K562 (cell line): ENCODE measurements at regions of chr12 and their contacts with region 1.

Region 1: DNA sequence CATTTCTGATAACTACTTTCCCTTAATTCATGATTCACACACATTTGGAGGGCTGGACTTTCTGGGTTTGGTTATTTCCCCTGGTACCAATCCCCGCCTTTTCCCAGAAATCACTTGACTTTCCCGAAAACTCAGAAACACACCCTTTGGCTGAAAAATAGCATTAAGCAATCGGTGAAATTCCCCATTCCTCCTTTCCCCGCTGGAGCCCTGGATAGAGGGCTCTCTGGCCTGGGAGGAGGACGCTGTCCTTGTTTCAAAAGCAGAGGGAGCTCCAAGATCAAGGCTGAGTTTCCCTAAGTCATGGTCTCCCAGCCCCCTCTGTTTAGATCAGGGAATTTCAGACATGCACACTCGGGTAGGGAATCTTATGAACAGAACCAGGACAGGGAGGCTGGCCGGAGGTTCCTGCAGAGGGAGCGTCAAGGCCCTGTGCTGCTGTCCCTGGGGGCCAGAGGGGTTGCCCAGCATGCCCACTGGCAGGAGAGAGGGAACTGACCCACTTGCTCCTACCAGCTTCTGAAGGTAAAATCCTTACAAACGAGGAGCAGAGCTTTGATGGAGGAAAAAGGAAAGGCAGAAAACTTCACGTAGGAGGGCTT is at the start of gene C1S:
- DNase-seq: peak; percentile 29 to 59 (median 43)
- ATAC-seq: peak; percentile 88
- H3K4me3 ChIP-seq: no peak within 1 kb of the TSS
- H3K27ac ChIP-seq: no peak within 1 kb of the TSS
- H3K4me1 ChIP-seq: peaks cover 11 to 18% of the 10 kb centered on the region in 2 experiments; a peak in 3 of 5 replicates
- H3K27me3 ChIP-seq: no peaks in the 10 kb centered on the region
- CTCF ChIP-seq: peak; percentile 65 to 79 (median 68)
- EP300 ChIP-seq: no peak
- POLR2A ChIP-seq: no peak
- RAD21 ChIP-seq: peak; percentile 73 to 74
- polyA plus RNA-seq, gene C1S: 0.08 to 0.11 TPM

Region 2: DNA sequence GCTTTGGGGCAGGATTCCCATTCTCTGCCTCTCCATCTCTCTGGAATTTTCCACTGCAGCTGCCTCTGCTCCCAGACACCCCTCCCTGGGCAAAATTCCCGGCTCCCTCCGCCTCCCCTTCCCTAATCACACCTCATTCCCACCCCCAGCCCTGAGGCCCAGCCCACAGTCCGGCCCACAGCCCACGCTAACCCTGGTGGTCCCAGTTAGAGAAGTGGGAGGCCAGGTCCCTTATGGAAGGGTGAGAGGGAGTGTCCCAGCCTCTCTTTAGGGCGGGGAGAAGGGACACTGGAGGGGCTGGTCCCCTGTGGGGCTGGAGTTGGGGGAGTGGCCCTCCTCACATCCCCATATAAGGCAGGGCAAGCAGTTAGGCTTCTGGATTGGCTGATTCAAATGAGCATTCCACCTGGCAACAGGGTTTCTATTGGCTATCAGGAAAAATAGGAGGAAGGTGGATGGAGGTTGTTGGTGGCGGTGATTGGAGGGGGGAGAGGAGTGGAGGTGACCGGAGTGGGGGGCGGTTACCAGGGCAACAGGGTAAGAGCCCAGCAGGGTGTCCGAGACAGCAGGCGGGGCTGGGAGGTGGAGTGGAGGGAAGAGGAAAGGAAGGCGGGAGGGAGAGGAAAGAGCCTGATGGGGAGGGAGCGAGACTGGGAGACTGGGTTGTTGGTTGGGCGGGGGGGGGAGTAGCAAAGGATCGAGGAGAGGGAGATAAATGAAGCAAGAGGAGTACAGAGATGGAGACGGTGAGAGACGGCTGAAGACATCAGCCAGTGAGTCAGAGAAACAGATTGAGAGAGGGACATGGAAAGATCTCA is 296.2 kb before region 1 on chr12:
- CTCF ChIA-PET with region 1: no interaction called
- POLR2A ChIA-PET with region 1: no interaction called
- in situ Hi-C with region 1: no loop called
- intact Hi-C with region 1: no loop called
- DNase-seq: peak; percentile 87 to 95 (median 90)
- ATAC-seq: peak; percentile 86
- H3K4me3 ChIP-seq: no peak overlapping the region
- H3K27ac ChIP-seq: peak overlapping the region; percentile 65
- H3K4me1 ChIP-seq: peaks cover 24 to 29% of the 10 kb centered on the region in 2 experiments; a peak in 4 of 5 replicates
- H3K27me3 ChIP-seq: no peaks in the 10 kb centered on the region
- CTCF ChIP-seq: no peak
- EP300 ChIP-seq: peak; percentile 33; the same call in 1 of the 2 replicates
- POLR2A ChIP-seq: no peak
- RAD21 ChIP-seq: no peak

Region 3: DNA sequence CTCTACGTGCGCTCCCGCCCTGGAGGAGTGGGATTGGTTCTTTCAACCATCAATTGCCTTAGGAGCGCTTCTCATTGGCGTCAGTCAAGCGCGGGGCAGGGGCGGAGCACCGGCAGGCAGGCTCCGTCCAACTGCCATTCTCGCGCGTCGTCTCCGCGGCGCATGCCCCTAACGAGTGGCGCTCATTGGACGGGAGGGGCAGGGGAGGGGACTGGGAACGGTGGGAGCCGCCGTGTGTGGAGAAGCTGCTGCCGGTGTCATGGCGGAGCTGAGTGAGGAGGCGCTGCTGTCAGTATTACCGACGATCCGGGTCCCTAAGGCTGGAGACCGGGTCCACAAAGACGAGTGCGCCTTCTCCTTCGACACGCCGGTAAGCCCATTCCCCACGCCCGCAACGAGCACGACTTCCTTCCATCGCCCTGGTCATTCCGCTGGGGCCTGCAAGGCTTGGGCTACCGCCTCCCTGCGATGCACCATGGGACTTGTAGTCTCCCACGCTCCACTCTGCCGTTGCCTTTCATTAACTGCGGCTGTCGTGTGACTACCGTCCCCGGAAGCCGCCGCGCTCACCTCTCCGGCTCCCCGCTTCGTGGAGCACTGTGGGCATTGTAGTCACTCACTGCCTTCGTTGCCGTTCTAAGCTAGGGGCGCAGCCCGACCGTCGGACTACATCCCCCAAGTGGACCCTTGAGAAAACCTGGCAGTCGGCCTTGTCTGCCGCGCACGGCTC is 208.4 kb before region 1 on chr12 and contains the start of gene USP5:
- CTCF ChIA-PET with region 1: no interaction called
- POLR2A ChIA-PET with region 1: no interaction called
- in situ Hi-C with region 1: no loop called
- intact Hi-C with region 1: no loop called
- DNase-seq: peak; percentile 87 to 98 (median 90)
- ATAC-seq: peak; percentile 87
- H3K4me3 ChIP-seq: peak within 1 kb of the TSS; percentile 79
- H3K27ac ChIP-seq: peak within 1 kb of the TSS; percentile 87
- H3K4me1 ChIP-seq: peaks cover 12 to 18% of the 10 kb centered on the region in 2 experiments; a peak in 4 of 5 replicates
- H3K27me3 ChIP-seq: no peaks in the 10 kb centered on the region
- CTCF ChIP-seq: 0 out of 6 replicates have a peak, but pooled peaks of 1 of the 3 experiments have one; percentile 1
- EP300 ChIP-seq: no peak
- POLR2A ChIP-seq: peak; percentile 79
- RAD21 ChIP-seq: no peak
- polyA plus RNA-seq, gene USP5: 1.4 to 3.4 TPM

Region 4: GRCh38 chr12:7092229-7092985 is 32.0 kb after region 1 on chr12 and contains the start of gene C1R:
- CTCF ChIA-PET with region 1: interaction called, 4 read pairs
- POLR2A ChIA-PET with region 1: no interaction called
- in situ Hi-C with region 1: no loop called
- intact Hi-C with region 1: loop called (anchors 2 kb)
- DNase-seq: peak; percentile 58 to 71 (median 60)
- ATAC-seq: peak; percentile 76
- H3K4me3 ChIP-seq: no peak within 1 kb of the TSS
- H3K27ac ChIP-seq: no peak within 1 kb of the TSS
- H3K4me1 ChIP-seq: peaks cover 6 to 24% of the 10 kb centered on the region in 2 experiments; a peak in 3 of 5 replicates
- H3K27me3 ChIP-seq: no peaks in the 10 kb centered on the region; a peak in 1 of 5 replicates
- CTCF ChIP-seq: peak; percentile 61 to 84 (median 81)
- EP300 ChIP-seq: no peak
- POLR2A ChIP-seq: no peak
- RAD21 ChIP-seq: peak; percentile 60 to 67
- polyA plus RNA-seq, gene C1R: 0.07 TPM in 1 of 2 experiments, not detected in the other

Region 5: GRCh38 chr12:7108796-7109571 is 48.5 kb after region 1 on chr12 and contains the start of gene C1RL:
- CTCF ChIA-PET with region 1: interaction called, 25 read pairs
- POLR2A ChIA-PET with region 1: no interaction called
- in situ Hi-C with region 1: no loop called
- intact Hi-C with region 1: loop called (anchors 1 kb)
- DNase-seq: peak; percentile 66 to 88 (median 68)
- ATAC-seq: peak; percentile 58
- H3K4me3 ChIP-seq: peak within 1 kb of the TSS; percentile 75
- H3K27ac ChIP-seq: peak within 1 kb of the TSS; percentile 97
- H3K4me1 ChIP-seq: peaks cover 10 to 21% of the 10 kb centered on the region in 2 experiments
- H3K27me3 ChIP-seq: no peaks in the 10 kb centered on the region
- CTCF ChIP-seq: peak; percentile 83 to 93 (median 86)
- EP300 ChIP-seq: peak; percentile 62
- POLR2A ChIP-seq: peak; percentile 52; the same call in 1 of the 2 replicates
- RAD21 ChIP-seq: peak; percentile 63 to 73
- polyA plus RNA-seq, gene C1RL: 1.4 to 1.9 TPM

Region 6: DNA sequence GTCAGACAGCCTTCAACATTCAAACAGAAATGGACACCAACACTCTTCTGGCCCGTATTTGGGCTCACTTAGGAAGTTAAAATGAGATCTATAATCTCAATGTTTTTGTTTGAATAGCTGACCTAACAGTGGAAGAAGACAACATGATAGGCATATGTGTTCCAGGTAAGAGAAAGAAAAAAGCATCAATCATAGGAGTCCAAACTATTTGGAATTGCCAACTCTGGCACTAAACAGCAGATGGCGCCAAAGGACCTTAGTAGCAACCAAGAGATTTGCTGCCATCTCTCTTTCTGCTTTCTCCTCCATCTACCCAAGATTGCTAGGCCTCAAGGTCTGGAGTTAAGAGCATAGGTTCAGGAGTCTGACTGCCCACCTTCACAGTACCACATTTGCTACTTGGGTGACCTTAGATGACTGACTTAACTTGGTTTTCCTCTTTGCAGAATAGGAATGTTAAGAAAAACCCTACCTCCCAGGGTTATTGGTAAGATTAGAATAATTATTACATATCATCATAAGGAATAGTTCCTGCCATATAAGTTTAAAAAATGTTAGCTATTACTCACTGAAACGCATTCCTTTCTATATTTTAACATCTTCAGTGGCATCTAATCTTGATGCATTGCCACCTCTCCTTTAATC is 159.3 kb after region 1 on chr12:
- CTCF ChIA-PET with region 1: no interaction called
- POLR2A ChIA-PET with region 1: no interaction called
- in situ Hi-C with region 1: no loop called
- intact Hi-C with region 1: no loop called
- DNase-seq: peak; percentile 44 to 77 (median 50)
- ATAC-seq: peak; percentile 75
- H3K4me3 ChIP-seq: no peak overlapping the region
- H3K27ac ChIP-seq: no peak overlapping the region
- H3K4me1 ChIP-seq: no peaks in the 10 kb centered on the region
- H3K27me3 ChIP-seq: no peaks in the 10 kb centered on the region
- CTCF ChIP-seq: peak; percentile 77 to 92 (median 91)
- EP300 ChIP-seq: no peak
- POLR2A ChIP-seq: no peak
- RAD21 ChIP-seq: peak; percentile 97 to 99